ENCODE measurements at regions of chr3 and their contacts with region 1.

Region 1: GRCh38 chr3:151203051-151203420 is at the start of gene GPR171:
- DNase-seq: peak; percentile 72
- H3K4me3 Mint-ChIP-seq: peak within 1 kb of the TSS; percentile 96
- H3K27ac Mint-ChIP-seq: peak within 1 kb of the TSS; percentile 99
- H3K4me1 Mint-ChIP-seq: peaks cover 73% of the 10 kb centered on the region
- H3K27me3 Mint-ChIP-seq: no peaks in the 10 kb centered on the region
- total RNA-seq, gene GPR171: 172 and 191 TPM in 2 replicates

Region 2: DNA sequence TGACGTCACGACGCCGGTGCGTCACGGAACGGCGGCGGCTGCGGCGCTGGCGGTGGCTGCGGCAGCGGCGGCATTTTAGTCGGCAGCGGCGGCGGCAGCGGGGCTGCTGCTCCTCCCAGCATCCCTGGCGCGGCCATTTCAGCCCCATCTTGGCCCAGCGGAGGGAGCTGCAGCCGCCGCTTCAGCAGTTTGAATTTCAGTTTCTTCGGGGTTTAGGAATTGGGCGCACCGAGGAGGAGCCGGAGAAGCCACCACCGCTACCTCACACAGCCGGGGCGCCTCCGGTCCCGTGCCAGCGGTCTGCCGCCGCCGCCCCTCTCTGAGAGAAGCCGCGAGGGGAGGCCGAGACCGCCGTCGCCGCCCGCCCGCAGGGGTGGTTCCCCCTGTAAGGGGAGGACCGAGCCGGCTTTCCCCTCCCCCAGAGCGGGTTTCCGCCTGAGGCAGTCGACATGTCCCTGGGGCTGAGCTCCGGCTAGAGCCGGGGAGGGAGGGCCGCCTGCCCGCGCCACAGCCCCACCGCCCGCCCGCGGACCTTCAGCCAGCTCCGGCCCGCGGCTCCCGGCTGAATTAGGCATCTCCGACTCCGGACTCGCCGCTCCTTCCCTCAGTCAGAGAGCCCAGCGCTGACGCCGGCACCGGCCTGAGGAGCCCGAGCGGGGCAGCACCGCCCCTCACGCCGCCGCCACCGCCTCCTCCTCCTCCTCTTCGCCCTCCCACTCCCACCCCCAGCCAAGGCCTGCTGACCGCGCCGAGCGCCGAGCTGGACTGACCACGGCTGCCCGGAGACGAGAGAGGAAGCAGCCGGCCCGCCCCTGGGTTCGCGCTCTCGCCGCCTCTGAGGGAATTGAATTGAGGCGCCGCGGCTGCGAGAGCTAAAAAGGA is 794.6 kb before region 1 on chr3 and contains the start of gene TSC22D2:
- intact Hi-C with region 1: loop called (anchors 5 kb)
- DNase-seq: peak; percentile 92
- H3K4me3 Mint-ChIP-seq: peak within 1 kb of the TSS; percentile 83
- H3K27ac Mint-ChIP-seq: peak within 1 kb of the TSS; percentile 95
- H3K4me1 Mint-ChIP-seq: peaks cover 40% of the 10 kb centered on the region
- H3K27me3 Mint-ChIP-seq: peaks cover 6% of the 10 kb centered on the region
- total RNA-seq, gene TSC22D2: 21.3 and 22.7 TPM in 2 replicates

Region 3: DNA sequence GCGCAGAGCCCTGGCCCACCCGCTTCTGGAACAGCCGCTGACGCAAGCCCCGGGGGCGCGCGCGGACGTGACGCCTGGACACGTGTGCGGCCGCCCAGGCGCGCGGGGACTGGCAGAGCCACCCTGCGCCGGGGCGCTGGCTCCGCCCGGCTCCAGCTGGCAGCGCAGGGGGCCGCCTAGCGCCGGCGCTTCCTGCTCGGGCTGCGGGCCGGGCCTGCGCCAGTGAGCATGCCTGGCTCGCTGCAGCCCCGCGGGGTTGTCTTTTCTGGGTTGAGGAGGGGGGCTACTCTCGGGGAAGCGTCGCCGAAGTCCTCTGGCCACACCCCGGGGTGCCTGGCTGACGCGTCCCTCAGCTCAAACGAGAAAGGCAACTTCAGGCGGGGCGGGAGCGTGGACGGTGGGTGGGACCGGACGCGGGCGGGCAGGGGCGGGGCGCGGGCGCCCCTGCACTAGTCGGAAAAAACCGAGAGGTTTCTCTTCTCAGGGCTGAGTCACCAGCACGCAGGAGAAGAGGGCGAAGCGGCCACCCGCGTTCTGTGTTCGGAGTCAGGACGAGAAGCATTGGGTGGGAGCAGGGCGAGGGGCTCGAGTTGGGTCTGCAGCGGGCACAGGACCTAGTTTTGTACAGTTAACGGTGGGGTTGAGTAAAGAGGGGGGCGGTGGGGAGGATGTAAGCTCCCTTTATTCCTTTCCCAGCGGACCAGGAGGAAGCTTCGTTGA is 439.8 kb before region 1 on chr3 and contains the start of gene SIAH2:
- intact Hi-C with region 1: loop called (anchors 1 kb)
- DNase-seq: peak; percentile 90
- H3K4me3 Mint-ChIP-seq: peak within 1 kb of the TSS; percentile 99
- H3K27ac Mint-ChIP-seq: peak within 1 kb of the TSS; percentile 100
- H3K4me1 Mint-ChIP-seq: peaks cover 64% of the 10 kb centered on the region
- H3K27me3 Mint-ChIP-seq: no peaks in the 10 kb centered on the region
- total RNA-seq, gene SIAH2: 175 and 177 TPM in 2 replicates

Region 4: DNA sequence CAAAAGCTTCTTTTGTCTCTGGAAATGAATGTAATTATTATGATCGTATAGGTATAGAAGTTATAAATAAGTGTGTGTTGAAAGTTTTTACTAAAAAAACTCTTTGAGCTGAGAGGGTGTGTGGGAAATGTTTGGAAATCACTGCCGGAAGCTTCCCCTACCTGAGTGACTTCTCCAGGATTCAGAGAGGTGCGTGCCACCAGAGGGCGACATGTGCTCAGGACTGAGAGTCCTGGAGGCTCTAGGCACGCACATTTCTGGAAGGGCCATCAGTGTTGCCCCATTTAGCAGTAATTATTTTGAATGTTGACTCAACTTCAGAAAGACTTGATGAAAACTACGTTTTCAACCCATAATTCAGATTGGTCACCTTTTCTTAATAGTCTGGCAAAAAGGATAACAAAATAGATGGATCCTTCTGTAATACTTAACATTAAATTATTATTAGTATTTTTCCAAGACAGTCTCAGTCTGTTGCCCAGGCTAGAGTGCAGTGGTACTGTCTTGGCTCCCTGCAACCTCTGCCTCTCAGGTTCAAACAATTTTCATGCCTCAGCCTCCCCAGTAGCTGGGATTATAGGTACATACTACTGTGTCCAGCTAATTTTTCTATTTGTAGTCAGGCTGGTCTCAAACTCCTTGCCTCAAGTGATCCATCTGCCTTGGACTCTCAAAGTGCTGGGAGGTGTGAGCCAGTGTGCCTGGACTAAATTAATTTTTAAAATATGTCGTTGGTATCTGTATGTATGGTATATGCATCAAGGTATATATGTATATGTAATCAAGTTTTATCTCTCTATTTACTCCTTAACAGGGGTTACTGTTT is 34.6 kb before region 1 on chr3:
- intact Hi-C with region 1: loop called (anchors 1 kb)
- DNase-seq: peak; percentile 66
- H3K4me3 Mint-ChIP-seq: no peak overlapping the region
- H3K27ac Mint-ChIP-seq: no peak overlapping the region
- H3K4me1 Mint-ChIP-seq: peaks cover 46% of the 10 kb centered on the region
- H3K27me3 Mint-ChIP-seq: peaks cover 3% of the 10 kb centered on the region

Region 5: GRCh38 chr3:151227807-151228665 is 25.0 kb after region 1 on chr3:
- intact Hi-C with region 1: loop called (anchors 1 kb)
- DNase-seq: peak; percentile 75
- H3K4me3 Mint-ChIP-seq: peak overlapping the region; percentile 27
- H3K27ac Mint-ChIP-seq: peak overlapping the region; percentile 82
- H3K4me1 Mint-ChIP-seq: peaks cover 61% of the 10 kb centered on the region
- H3K27me3 Mint-ChIP-seq: no peaks in the 10 kb centered on the region

Region 6: GRCh38 chr3:152205097-152205593 is 1002.1 kb after region 1 on chr3:
- intact Hi-C with region 1: loop called (anchors 5 kb)
- DNase-seq: no peak
- H3K4me3 Mint-ChIP-seq: peak overlapping the region; percentile 88
- H3K27ac Mint-ChIP-seq: peak overlapping the region; percentile 95
- H3K4me1 Mint-ChIP-seq: peaks cover 83% of the 10 kb centered on the region
- H3K27me3 Mint-ChIP-seq: no peaks in the 10 kb centered on the region

Region 7: GRCh38 chr3:152508705-152509104 is 1305.7 kb after region 1 on chr3:
- intact Hi-C with region 1: no loop called
- DNase-seq: no peak
- H3K4me3 Mint-ChIP-seq: no peak overlapping the region
- H3K27ac Mint-ChIP-seq: no peak overlapping the region
- H3K4me1 Mint-ChIP-seq: peaks cover 24% of the 10 kb centered on the region
- H3K27me3 Mint-ChIP-seq: peaks cover 4% of the 10 kb centered on the region

Region 8: GRCh38 chr3:153161138-153161713 is 1958.2 kb after region 1 on chr3:
- intact Hi-C with region 1: loop called (anchors 10 kb)
- DNase-seq: peak; percentile 91
- H3K4me3 Mint-ChIP-seq: peak overlapping the region; percentile 90
- H3K27ac Mint-ChIP-seq: peak overlapping the region; percentile 97
- H3K4me1 Mint-ChIP-seq: peaks cover 47% of the 10 kb centered on the region
- H3K27me3 Mint-ChIP-seq: no peaks in the 10 kb centered on the region

Measured in activated T-helper 1 cell treated with anti-CD3 and anti-CD28 coated beads, Interleukin-12 subunit alpha, Interleukin-12 subunit beta, Interleukin-2, Interleukin-4 antibody, amounts not matched to agents 30 ng/mL and 10 ng/mL and 1 ng/mL, durations not matched to agents 14 hours and 24 hours and 36 hours (primary cell).